Dorsolateral prefrontal cortex (tissue), 120 donors: ENCODE measurements at regions of chr11 and their contacts with region 1.

Region 1: DNA sequence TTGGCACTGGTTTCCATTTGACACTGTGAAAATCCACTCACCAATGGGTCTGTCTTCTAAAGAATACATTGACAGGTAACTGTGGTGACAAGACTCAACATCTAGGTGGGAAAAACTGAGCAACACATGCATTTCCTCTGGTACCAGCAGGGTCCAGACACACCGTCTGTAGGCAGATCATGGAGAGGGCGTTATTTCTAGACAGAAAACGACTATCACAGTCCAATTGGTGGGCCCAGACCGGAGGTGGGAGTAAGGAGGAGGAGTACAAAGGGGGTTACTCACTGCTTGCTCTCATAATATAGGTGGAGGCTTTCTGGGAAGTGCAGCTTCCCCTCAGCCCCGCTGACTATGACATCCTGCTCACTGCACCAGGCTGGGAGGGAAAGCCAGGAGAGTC is 9.9 kb downstream of the OVCH2 start:
- DNase-seq: no peak
- H3K4me3 ChIP-seq: no peak overlapping the region
- H3K27ac ChIP-seq: peak overlapping the region in 6 of 59 donors; percentile 6 to 79 (median 59)
- H3K27me3 ChIP-seq: peaks cover 0 to 6% (median 0%) of the 10 kb centered on the region in 45 donors
- CTCF ChIP-seq: no peak

Region 2: GRCh38 chr11:6812390-6813005 is 883.9 kb before region 1 on chr11:
- intact Hi-C with region 1: loop called in 1 of 2 experiments (anchors 5 kb)
- DNase-seq: no peak
- H3K4me3 ChIP-seq: no peak overlapping the region
- H3K27ac ChIP-seq: no peak overlapping the region
- H3K27me3 ChIP-seq: peaks cover 0 to 9% (median 0%) of the 10 kb centered on the region in 45 donors
- CTCF ChIP-seq: peak; percentile 40 to 87 (median 76)

Region 3: DNA sequence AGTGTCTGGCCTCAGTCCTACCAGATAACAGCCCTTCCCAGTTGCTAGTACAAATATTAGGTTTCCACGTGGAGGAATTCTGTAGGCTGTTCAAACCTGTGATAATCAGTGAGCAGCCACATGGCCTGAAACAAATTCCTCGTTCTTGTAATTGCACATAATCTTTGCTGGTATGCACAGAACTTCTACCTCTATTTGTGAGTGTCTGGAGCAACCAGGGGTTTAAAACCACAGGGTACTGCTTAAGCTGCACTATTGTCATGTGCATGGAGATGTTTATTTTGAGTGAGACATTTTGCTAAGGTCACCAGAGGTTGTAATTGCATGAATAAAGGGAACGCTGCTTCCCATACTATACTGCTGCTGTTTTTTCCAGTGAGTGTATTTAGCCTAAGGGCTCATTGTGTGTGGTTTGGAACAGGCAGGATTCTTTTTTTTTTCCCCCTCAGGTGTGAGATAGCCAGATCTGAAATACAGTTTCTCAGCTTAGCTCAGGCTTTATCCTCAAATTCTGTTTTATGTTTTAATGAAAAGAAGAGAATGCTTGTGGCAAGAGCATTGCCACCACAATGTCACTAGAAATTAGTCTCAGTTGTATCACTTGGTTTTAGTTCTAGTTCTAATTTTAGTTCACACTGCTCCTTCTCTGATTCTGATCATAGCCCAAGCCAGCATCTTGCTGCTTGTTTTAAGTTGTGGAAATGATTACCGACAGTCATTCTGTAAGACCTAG is 83.6 kb before region 1 on chr11:
- intact Hi-C with region 1: no loop called
- DNase-seq: no peak
- H3K4me3 ChIP-seq: no peak overlapping the region
- H3K27ac ChIP-seq: peak overlapping the region in 24 of 59 donors; percentile 1 to 58 (median 26)
- H3K27me3 ChIP-seq: no peaks in the 10 kb centered on the region
- CTCF ChIP-seq: no peak

Region 4: DNA sequence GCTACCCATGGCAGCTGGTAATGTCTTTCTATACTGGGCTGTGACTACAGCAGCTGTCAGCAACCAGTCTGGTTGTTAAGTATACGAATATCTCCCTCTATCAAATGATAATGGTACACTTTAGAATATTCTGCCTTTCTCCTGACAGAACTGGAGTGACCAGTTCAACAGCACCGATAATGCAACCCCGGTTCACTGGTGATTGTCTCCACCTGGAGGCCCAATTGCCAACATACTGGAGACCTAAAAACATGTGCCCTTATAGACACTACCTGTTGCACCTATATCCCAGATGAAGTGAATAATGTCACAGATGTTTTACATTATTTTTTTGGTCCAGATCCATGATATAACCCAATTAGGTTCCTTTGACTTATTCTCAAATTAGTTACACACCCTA is 79.3 kb after region 1 on chr11:
- intact Hi-C with region 1: no loop called
- DNase-seq: no peak
- H3K4me3 ChIP-seq: no peak overlapping the region
- H3K27ac ChIP-seq: no peak overlapping the region
- H3K27me3 ChIP-seq: peaks cover 0 to 4% (median 0%) of the 10 kb centered on the region in 45 donors
- CTCF ChIP-seq: no peak